CD4-positive, alpha-beta T cell (primary cell): ENCODE measurements at regions of chr10 and their contacts with region 1.

Region 1: GRCh38 chr10:91251430-91252056 is 31.1 kb downstream of the PCGF5 start:
- DNase-seq: peak; percentile 26 to 82 (median 36)
- ATAC-seq: peak; percentile 90
- H3K4me3 ChIP-seq: no peak overlapping the region
- H3K4me3 Mint-ChIP-seq: no peak overlapping the region
- H3K27ac ChIP-seq: no peak overlapping the region
- H3K27ac Mint-ChIP-seq: no peak overlapping the region
- H3K4me1 ChIP-seq: peaks cover 6% of the 10 kb centered on the region
- H3K4me1 Mint-ChIP-seq: no peaks in the 10 kb centered on the region
- H3K27me3 ChIP-seq: no peaks in the 10 kb centered on the region
- H3K27me3 Mint-ChIP-seq: no peaks in the 10 kb centered on the region
- CTCF ChIP-seq: peak; percentile 99

Region 2: DNA sequence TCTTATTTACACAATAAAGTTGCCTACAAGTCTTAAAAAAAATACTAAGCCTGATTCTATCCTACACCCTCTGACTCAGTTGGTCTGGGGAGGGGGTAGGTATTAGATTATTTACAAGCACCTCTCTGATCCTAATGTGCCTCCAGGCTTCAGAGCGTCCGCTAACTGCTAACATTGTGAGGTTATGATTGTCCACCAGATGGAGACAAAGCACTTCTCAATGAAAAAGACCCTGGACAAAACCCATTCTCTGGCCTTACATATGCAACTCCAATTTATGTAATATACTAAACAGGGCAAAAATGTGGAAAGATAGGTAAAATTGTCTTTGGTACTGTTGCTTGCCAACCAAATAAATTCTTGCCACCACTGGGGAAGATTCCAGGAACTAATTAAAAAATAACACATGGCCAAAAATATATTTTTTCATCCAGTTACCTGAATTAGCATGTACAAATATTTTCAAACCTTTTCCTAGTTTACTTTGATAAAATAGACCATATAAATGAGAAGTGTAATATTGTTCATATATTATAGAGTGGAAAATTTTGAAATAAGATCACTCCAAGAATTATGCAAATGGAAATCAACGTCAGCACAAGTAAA is 1457.8 kb before region 1 on chr10:
- CTCF ChIA-PET with region 1: no interaction called
- POLR2A ChIA-PET with region 1: no interaction called
- intact Hi-C with region 1: loop called in 1 of 2 experiments (anchors 5 kb)
- DNase-seq: peak in 8 of 14 experiments; percentile 5 to 77 (median 27)
- ATAC-seq: peak; percentile 52
- H3K4me3 ChIP-seq: no peak overlapping the region
- H3K4me3 Mint-ChIP-seq: no peak overlapping the region
- H3K27ac ChIP-seq: no peak overlapping the region
- H3K27ac Mint-ChIP-seq: no peak overlapping the region
- H3K4me1 ChIP-seq: no peaks in the 10 kb centered on the region
- H3K4me1 Mint-ChIP-seq: no peaks in the 10 kb centered on the region
- H3K27me3 ChIP-seq: peaks cover 0 to 4% of the 10 kb centered on the region in 2 experiments
- H3K27me3 Mint-ChIP-seq: peaks cover 22% of the 10 kb centered on the region
- CTCF ChIP-seq: peak; percentile 85

Region 3: DNA sequence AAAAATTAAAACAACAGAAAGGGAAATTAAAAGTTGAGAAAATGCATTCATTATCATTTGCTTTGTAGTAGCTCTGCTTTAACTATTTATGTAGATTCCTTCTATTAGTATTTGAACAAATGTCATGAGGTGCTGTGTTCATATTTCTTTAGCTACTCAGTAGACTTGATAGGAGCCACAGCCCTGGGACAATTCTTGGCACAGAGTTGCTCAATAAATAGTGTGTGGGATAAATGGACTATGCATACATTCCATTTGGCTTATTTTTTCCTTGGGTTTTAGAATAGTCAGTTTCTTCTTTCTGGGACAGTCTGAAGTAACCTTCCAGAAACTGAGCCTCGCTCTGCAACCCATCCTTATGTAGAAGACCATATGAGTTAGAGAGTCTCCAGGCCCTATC is 366.4 kb before region 1 on chr10:
- CTCF ChIA-PET with region 1: interaction called, 6 read pairs
- POLR2A ChIA-PET with region 1: no interaction called
- intact Hi-C with region 1: loop called (anchors 1 to 10 kb)
- DNase-seq: no peak
- ATAC-seq: no peak
- H3K4me3 ChIP-seq: no peak overlapping the region
- H3K4me3 Mint-ChIP-seq: no peak overlapping the region
- H3K27ac ChIP-seq: no peak overlapping the region
- H3K27ac Mint-ChIP-seq: no peak overlapping the region
- H3K4me1 ChIP-seq: no peaks in the 10 kb centered on the region
- H3K4me1 Mint-ChIP-seq: peaks cover 9% of the 10 kb centered on the region
- H3K27me3 ChIP-seq: no peaks in the 10 kb centered on the region
- H3K27me3 Mint-ChIP-seq: no peaks in the 10 kb centered on the region
- CTCF ChIP-seq: no peak

Region 4: DNA sequence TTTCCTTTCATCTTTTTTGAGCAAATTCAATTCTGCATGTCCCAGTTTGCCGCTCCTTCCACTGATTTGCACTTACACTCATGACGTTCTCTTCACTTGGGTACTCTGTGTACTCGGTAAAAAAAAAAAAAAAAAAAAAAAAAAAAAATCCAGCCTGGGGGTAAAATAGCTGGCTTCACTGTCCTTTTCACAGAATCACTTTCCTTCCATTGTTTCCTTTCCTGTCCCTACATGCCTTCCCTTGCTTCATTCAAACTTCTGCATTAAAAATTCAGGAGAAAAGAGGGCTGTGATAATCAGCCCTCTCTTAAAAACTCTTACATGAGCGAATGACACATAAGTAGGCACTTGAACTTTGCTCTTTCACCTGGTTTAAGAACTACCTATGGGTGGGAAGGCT is 339.4 kb before region 1 on chr10:
- CTCF ChIA-PET with region 1: interaction called, 8 read pairs
- POLR2A ChIA-PET with region 1: interaction called, 4 read pairs
- intact Hi-C with region 1: loop called (anchors 1 kb)
- DNase-seq: no peak
- ATAC-seq: no peak
- H3K4me3 ChIP-seq: no peak overlapping the region
- H3K4me3 Mint-ChIP-seq: no peak overlapping the region
- H3K27ac ChIP-seq: no peak overlapping the region
- H3K27ac Mint-ChIP-seq: no peak overlapping the region
- H3K4me1 ChIP-seq: peaks cover 4% of the 10 kb centered on the region
- H3K4me1 Mint-ChIP-seq: peaks cover 4% of the 10 kb centered on the region
- H3K27me3 ChIP-seq: no peaks in the 10 kb centered on the region
- H3K27me3 Mint-ChIP-seq: peaks cover 4% of the 10 kb centered on the region
- CTCF ChIP-seq: no peak

Region 5: GRCh38 chr10:91088300-91089140 is 163.0 kb before region 1 on chr10:
- CTCF ChIA-PET with region 1: interaction called, 30 read pairs
- POLR2A ChIA-PET with region 1: interaction called, 6 read pairs
- intact Hi-C with region 1: loop called (anchors 1 kb)
- DNase-seq: peak in 3 of 14 experiments; percentile 43 to 49 (median 48)
- ATAC-seq: peak; percentile 61
- H3K4me3 ChIP-seq: no peak overlapping the region
- H3K4me3 Mint-ChIP-seq: no peak overlapping the region
- H3K27ac ChIP-seq: no peak overlapping the region
- H3K27ac Mint-ChIP-seq: no peak overlapping the region
- H3K4me1 ChIP-seq: no peaks in the 10 kb centered on the region
- H3K4me1 Mint-ChIP-seq: no peaks in the 10 kb centered on the region
- H3K27me3 ChIP-seq: no peaks in the 10 kb centered on the region
- H3K27me3 Mint-ChIP-seq: no peaks in the 10 kb centered on the region
- CTCF ChIP-seq: peak; percentile 49